ENCODE measurements at regions of chr2 and their contacts with region 1.

Region 1: DNA sequence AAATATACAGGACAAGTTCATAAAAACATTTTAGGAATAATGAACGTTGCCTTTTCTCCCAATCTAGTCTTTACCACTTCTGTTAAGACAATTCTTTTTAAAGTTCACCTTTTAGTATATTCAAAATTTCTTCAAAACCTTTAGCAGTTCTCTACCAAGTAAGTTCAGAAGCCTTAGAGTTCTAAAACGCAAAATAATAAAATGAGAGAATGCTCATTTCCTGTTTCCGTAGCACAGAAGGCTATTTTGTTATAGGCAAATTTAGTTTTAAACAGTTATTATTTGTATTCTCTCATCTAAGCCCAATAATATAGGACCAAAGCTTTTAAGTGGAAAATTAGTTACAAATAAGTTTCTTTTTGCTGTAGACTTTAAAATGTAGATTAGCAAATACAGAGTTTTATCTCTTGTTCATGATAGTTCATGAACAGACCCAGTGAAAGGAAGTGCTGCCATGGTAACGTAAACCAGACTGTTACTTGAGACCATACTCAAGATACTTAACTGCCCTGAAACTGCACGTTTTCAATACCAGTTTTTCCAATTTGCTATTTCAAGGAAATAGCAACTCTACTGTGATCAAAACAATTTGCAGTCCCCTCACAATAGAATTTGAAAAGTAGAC is 173.1 kb upstream of the STON1 start:
- DNase-seq: peak; percentile 9
- H3K4me3 Mint-ChIP-seq: peak overlapping the region; percentile 61
- H3K27ac Mint-ChIP-seq: peak overlapping the region; percentile 91
- H3K4me1 Mint-ChIP-seq: peaks cover 62% of the 10 kb centered on the region
- H3K27me3 Mint-ChIP-seq: no peaks in the 10 kb centered on the region

Region 2: GRCh38 chr2:48420512-48421197 is 63.8 kb after region 1 on chr2:
- intact Hi-C with region 1: loop called (anchors 1 kb)
- DNase-seq: peak; percentile 88
- H3K4me3 Mint-ChIP-seq: no peak overlapping the region
- H3K27ac Mint-ChIP-seq: peak overlapping the region; percentile 72
- H3K4me1 Mint-ChIP-seq: peaks cover 52% of the 10 kb centered on the region
- H3K27me3 Mint-ChIP-seq: peaks cover 2% of the 10 kb centered on the region

Region 3: DNA sequence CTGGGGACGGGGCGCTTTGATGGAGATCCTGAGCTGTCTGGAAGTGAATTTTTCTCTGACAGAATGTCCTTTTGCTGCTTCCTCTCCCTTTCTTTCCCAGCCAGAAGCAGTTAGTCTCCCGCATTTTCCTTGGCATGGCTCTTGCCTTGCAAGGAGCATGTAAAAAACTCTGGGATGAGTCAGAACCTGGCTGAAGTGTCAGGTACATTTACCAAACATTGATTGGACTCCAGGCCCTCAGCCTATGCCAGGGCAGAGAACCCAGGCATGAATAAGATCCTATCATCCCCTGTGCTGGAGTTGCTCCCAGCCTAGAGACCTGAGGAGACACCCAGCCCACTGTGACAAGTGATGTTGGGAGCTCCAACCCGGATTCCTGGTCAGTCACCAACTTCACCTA is 194.7 kb after region 1 on chr2:
- intact Hi-C with region 1: no loop called
- DNase-seq: no peak
- H3K4me3 Mint-ChIP-seq: no peak overlapping the region
- H3K27ac Mint-ChIP-seq: no peak overlapping the region
- H3K4me1 Mint-ChIP-seq: no peaks in the 10 kb centered on the region
- H3K27me3 Mint-ChIP-seq: no peaks in the 10 kb centered on the region

Measured in activated T-helper 1 cell treated with anti-CD3 and anti-CD28 coated beads, Interleukin-12 subunit alpha, Interleukin-12 subunit beta, Interleukin-2, Interleukin-4 antibody, amounts not matched to agents 30 ng/mL and 10 ng/mL and 1 ng/mL, durations not matched to agents 14 hours and 24 hours and 36 hours (primary cell).